PC-3 (cell line): ENCODE measurements at regions of chr11 and their contacts with region 1.

Region 1: DNA sequence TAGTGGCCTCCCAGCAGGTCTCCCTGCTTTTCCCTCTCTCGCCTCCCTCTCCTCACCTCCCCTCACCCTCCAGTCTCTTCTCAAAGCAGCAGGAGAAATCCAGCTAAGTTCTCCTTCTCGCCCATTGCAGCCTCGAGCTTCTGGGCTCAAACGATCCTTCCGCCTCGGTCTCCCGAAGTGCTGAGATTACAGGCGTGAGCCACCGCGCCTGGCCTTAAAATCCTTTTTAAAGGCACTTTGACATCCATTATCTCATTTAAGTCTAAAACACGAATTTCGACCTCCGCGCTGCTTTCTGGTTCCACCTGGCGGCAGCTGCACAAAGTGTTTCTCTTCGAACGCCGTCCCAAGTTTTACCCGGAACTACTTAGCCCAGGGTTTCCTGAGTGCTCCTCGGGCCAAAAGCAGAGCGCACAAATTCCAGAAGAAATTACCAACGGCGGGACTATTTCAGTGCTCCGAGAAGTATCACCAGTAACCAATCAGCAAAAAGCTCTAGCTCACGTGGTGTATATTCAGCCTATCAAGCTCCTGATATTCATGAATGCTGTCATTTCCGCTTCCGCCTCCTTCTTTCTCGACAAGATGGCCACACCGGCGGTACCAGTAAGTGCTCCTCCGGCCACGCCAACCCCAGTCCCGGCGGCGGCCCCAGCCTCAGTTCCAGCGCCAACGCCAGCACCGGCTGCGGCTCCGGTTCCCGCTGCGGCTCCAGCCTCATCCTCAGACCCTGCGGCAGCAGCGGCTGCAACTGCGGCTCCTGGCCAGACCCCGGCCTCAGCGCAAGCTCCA is at the start of gene EIF3F:
- DNase-seq: peak; percentile 98
- ATAC-seq: peak; percentile 97
- H3K4me3 ChIP-seq: peak within 1 kb of the TSS; percentile 100
- H3K27ac ChIP-seq: no peak within 1 kb of the TSS
- H3K4me1 ChIP-seq: peaks cover 22% of the 10 kb centered on the region
- H3K27me3 ChIP-seq: no peaks in the 10 kb centered on the region
- CTCF ChIP-seq: peak; percentile 85
- total RNA-seq, gene EIF3F: 182 and 227 TPM in 2 replicates

Region 2: GRCh38 chr11:7892840-7893254 is 94.1 kb before region 1 on chr11:
- CTCF ChIA-PET with region 1: interaction called, 27 read pairs
- POLR2A ChIA-PET with region 1: interaction called, 5 read pairs
- intact Hi-C with region 1: loop called (anchors 1 kb)
- DNase-seq: peak; percentile 81
- ATAC-seq: peak; percentile 84
- H3K4me3 ChIP-seq: no peak overlapping the region
- H3K27ac ChIP-seq: no peak overlapping the region
- H3K4me1 ChIP-seq: peaks cover 21% of the 10 kb centered on the region
- H3K27me3 ChIP-seq: no peaks in the 10 kb centered on the region
- CTCF ChIP-seq: peak; percentile 76

Region 3: DNA sequence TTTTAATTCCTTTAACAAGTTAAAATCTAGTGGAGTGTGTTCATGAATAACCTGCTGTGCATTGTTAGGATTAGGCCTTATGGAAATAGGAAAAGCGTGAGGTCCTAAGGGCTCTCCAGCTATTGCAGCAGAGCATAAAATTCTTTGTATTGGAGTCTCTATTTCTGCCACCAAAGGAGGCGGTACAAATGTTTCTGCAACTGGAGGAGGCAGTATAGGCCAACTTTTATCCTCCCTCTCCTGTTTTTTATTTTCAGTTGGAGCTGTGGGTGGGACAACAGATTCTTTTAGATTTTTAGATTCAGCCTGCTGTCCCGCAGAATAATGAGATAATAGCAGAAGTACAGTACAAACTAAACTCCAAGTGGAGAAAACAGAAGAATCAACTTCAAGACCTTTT is 82.0 kb before region 1 on chr11:
- CTCF ChIA-PET with region 1: interaction called, 30 read pairs
- POLR2A ChIA-PET with region 1: interaction called, 8 read pairs
- intact Hi-C with region 1: loop called (anchors 1 kb)
- DNase-seq: peak; percentile 66
- ATAC-seq: no peak
- H3K4me3 ChIP-seq: peak overlapping the region; percentile 52
- H3K27ac ChIP-seq: peak overlapping the region; percentile 44; the same call in 1 of the 2 replicates
- H3K4me1 ChIP-seq: peaks cover 68% of the 10 kb centered on the region
- H3K27me3 ChIP-seq: no peaks in the 10 kb centered on the region
- CTCF ChIP-seq: peak; percentile 59

Region 4: GRCh38 chr11:8070417-8071115 is 83.6 kb after region 1 on chr11:
- CTCF ChIA-PET with region 1: no interaction called
- POLR2A ChIA-PET with region 1: no interaction called
- intact Hi-C with region 1: no loop called
- DNase-seq: peak; percentile 50
- ATAC-seq: peak; percentile 57
- H3K4me3 ChIP-seq: no peak overlapping the region
- H3K27ac ChIP-seq: no peak overlapping the region
- H3K4me1 ChIP-seq: peaks cover 16% of the 10 kb centered on the region
- H3K27me3 ChIP-seq: peaks cover 16% of the 10 kb centered on the region
- CTCF ChIP-seq: peak; percentile 58